A673 (cell line): ENCODE measurements at regions of chr20 and their contacts with region 1.

Region 1: GRCh38 chr20:45963059-45964005 is 8.7 kb downstream of the ZNF335 start:
- DNase-seq: peak; percentile 54
- H3K4me3 ChIP-seq: no peak overlapping the region
- H3K27ac ChIP-seq: no peak overlapping the region
- H3K4me1 ChIP-seq: no peaks in the 10 kb centered on the region
- H3K27me3 ChIP-seq: no peaks in the 10 kb centered on the region
- CTCF ChIP-seq: peak; percentile 39

Region 2: GRCh38 chr20:45798935-45799642 is 164.2 kb before region 1 on chr20:
- CTCF ChIA-PET with region 1: interaction called, 3 read pairs
- POLR2A ChIA-PET with region 1: interaction called, 4 read pairs
- intact Hi-C with region 1: loop called (anchors 5 kb)
- DNase-seq: peak; percentile 58
- H3K4me3 ChIP-seq: no peak overlapping the region
- H3K27ac ChIP-seq: no peak overlapping the region
- H3K4me1 ChIP-seq: no peaks in the 10 kb centered on the region
- H3K27me3 ChIP-seq: no peaks in the 10 kb centered on the region
- CTCF ChIP-seq: peak; percentile 69

Region 3: DNA sequence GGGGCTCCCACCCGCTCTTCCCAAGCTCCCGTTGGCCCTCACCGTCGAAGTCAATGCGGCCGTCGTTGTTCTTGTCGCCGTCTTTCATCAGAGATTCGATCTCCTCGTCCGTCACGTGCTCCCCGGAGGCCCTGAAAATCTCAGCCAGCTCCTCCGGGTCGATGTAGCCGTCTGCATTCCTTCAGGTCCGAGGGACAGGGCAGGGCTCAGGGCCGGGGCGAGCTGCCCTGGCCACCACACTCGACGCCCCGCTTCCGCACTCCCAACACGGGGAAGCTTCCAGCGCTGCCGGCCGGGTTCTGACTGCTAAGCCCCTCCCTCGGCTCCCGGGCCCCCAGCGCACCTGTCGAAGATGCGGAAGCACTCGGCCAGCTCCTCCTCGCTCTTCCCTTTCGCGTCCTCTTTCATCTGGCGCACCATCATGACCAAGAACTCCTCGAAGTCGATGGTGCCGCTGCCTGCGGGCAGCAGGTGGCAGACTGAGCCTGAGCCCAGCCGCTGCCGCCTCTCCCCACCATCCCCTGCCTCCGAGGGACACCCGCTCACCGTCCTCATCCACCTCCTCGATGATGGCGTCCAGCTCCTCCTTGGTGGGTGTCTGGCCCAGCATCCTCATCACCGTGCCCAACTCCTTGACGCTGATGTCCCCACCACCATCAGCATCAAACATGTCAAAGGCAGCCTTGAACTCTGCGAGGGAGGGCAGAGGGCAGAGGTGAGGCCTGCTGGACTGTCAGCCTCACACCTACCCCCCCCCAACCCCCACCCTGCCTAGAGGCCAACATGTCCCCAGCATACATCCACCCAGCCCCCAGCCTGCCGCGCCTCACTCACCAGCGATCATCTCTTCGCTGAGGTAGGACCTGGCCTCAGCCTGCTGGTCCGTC is 139.1 kb before region 1 on chr20:
- CTCF ChIA-PET with region 1: no interaction called
- POLR2A ChIA-PET with region 1: no interaction called
- intact Hi-C with region 1: loop called (anchors 5 kb)
- DNase-seq: peak; percentile 60
- H3K4me3 ChIP-seq: no peak overlapping the region
- H3K27ac ChIP-seq: no peak overlapping the region
- H3K4me1 ChIP-seq: no peaks in the 10 kb centered on the region
- H3K27me3 ChIP-seq: no peaks in the 10 kb centered on the region
- CTCF ChIP-seq: peak; percentile 67

Region 4: GRCh38 chr20:45927071-45927878 is 36.1 kb before region 1 on chr20:
- CTCF ChIA-PET with region 1: no interaction called
- POLR2A ChIA-PET with region 1: interaction called, 15 read pairs
- intact Hi-C with region 1: no loop called
- DNase-seq: no peak
- H3K4me3 ChIP-seq: no peak overlapping the region
- H3K27ac ChIP-seq: no peak overlapping the region
- H3K4me1 ChIP-seq: no peaks in the 10 kb centered on the region
- H3K27me3 ChIP-seq: no peaks in the 10 kb centered on the region
- CTCF ChIP-seq: no peak